ENCODE measurements at regions of chr5 and their contacts with region 1.

Region 1: DNA sequence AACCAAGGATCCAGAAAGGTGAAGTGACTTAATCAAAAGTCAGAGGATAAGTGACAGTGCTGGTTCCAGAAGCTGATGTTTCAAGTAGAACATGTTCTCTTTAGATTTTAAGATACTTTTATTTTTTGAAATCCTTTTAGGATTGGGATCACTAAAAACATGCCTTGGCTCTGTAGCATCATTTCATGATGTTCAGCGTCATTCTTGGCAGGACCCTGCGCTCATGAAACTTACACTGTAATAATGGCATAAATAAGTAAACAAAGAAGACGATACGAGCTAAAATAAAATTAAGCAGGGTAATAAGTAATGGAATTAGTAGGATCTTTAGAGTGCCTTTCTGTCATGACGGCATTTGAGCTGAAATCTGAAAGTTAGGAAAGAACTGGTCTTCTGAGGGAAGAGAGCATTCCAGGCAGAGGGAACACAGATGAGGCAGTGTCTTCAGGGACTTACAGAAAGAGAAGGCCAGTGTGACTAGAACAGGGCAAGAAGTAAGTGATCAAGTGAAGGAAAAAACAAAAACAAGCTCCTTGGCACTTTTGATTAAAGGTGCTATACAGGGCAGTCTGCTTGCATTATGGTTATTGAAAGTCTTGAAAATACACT is 19.9 kb downstream of the CTNNA1 start:
- DNase-seq: no peak
- H3K4me3 ChIP-seq: no peak overlapping the region
- H3K27ac ChIP-seq: no peak overlapping the region
- H3K4me1 ChIP-seq: no peaks in the 10 kb centered on the region
- H3K27me3 ChIP-seq: no peaks in the 10 kb centered on the region

Region 2: DNA sequence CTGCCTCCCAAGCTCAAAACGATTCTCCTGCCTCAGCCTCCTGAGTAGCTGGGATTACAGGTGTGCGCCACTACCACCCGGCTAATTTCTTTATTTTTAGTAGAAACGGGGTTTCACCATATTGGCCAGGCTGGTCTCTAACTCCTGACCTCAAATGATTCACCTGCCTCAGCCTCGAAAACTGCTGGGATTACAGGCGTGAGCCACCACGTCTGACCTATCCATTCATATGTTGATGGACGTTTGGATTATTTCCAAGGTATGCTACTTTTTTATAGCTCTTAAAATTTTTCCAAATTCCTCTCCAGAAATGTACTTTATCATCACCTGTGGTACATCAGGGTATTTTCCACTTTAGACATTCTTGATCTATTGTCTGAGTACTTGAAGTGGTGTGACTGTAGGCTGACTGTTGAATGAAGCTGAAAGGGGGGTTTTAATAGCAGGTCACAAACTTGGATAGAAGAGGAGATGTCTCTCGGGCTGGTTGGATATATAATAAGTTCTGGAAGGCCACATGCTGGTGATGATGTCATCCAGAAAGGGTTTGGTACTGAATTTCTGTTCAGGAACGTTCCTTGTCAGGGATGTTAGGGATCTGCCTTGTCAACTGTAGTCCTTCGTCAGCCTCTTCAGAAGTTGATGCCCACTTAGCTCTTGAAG is 12.5 kb before region 1 on chr5:
- CTCF ChIA-PET with region 1: interaction called, 12 read pairs
- POLR2A ChIA-PET with region 1: interaction called, 3 read pairs
- DNase-seq: no peak
- H3K4me3 ChIP-seq: no peak overlapping the region
- H3K27ac ChIP-seq: no peak overlapping the region
- H3K4me1 ChIP-seq: peaks cover 0 to 8% (median 2%) of the 10 kb centered on the region in 4 experiments
- H3K27me3 ChIP-seq: no peaks in the 10 kb centered on the region